GM12878 (cell line): ENCODE measurements at regions of chr7 and their contacts with region 1.

Region 1: DNA sequence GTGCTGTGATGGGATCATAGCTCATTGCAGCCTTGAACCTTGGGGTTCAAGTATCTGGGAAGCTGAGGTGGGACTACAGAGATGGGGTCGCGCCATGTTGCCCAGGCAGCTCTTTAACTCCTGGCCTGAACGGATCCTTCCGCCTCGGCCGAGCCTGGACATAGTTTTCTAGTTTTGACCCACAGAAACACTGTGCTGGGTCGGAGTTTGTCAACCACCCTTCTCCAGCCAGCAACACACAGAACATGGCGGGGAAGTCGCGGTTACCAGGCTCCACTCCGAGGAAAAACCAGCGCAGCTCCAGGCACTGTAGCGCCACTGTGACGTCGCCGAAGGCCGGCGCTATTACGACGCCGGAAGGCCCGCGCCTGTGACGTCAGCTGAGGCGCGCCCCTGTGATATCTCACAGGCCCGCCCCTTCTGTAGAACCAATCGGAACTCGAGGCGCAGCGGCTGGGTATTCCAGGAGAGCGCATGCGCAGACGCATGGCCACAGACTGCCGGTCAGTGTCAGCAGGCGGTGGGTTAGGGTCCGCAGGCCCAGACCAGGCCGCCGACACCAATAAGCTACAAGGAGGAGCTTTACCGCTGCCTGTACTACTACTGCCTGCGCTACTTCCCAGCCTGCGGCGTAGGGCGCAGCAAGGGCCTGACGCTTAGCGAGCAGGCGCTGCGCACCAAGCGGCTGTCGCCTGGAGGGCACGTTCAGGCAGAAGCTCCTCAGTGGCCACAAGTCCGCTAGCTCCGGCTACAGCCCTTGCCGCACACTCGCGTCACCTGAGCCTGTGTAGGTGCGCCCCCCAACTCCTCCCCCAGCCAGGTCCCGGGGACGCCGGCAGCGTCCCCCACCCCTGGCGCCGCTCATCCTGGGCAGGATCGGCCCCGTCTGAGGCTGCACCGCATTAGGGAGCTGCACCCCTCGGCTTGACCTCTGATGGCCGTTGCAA is 135.2 kb upstream of the KCTD7 start:
- DNase-seq: peak; percentile 86
- ATAC-seq: peak; percentile 93
- H3K4me3 ChIP-seq: peak overlapping the region; percentile 96
- H3K27ac ChIP-seq: peak overlapping the region; percentile 81
- H3K4me1 ChIP-seq: no peaks in the 10 kb centered on the region
- H3K27me3 ChIP-seq: no peaks in the 10 kb centered on the region
- CTCF ChIP-seq: peak in 2 of 3 experiments; percentile 6 to 37; a peak in 2 of 6 replicates
- EP300 ChIP-seq: 0 out of 4 replicates have a peak, but pooled peaks of 1 of the 2 experiments have one; percentile 10
- POLR2A ChIP-seq: peak; percentile 89
- RAD21 ChIP-seq: no peak

Region 2: DNA sequence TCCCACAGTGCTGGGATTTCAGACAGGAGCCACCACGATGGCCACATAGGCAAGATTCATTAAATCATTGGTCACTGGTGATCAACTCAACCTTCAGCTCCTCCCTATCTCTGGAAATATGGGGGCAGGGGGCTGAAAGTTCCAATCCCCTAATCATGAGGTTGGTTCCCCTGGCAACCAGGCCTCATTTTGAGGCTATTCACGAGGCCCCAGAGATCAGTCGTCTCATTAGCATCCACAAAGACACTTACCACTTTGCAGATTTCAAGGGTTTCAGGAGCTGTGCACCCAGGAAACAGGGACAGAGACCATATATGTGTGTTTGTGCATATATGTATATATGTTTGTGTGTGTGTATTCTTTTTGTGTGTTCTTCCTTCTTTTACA is 503.8 kb before region 1 on chr7:
- CTCF ChIA-PET with region 1: no interaction called
- POLR2A ChIA-PET with region 1: no interaction called
- RAD21 ChIA-PET with region 1: no interaction called
- SMC1A ChIA-PET with region 1: no interaction called
- in situ Hi-C with region 1: no loop called
- intact Hi-C with region 1: loop called (anchors 5 kb)
- DNase-seq: no peak
- ATAC-seq: no peak
- H3K4me3 ChIP-seq: no peak overlapping the region
- H3K27ac ChIP-seq: no peak overlapping the region
- H3K4me1 ChIP-seq: no peaks in the 10 kb centered on the region
- H3K27me3 ChIP-seq: no peaks in the 10 kb centered on the region
- CTCF ChIP-seq: no peak
- EP300 ChIP-seq: no peak
- POLR2A ChIP-seq: no peak
- RAD21 ChIP-seq: no peak

Region 3: GRCh38 chr7:66204822-66205740 is 288.4 kb before region 1 on chr7 and contains the start of gene TPST1:
- CTCF ChIA-PET with region 1: no interaction called
- POLR2A ChIA-PET with region 1: no interaction called
- RAD21 ChIA-PET with region 1: no interaction called
- SMC1A ChIA-PET with region 1: no interaction called
- in situ Hi-C with region 1: no loop called
- intact Hi-C with region 1: loop called (anchors 10 kb)
- DNase-seq: peak; percentile 73
- ATAC-seq: peak; percentile 97
- H3K4me3 ChIP-seq: peak within 1 kb of the TSS; percentile 94
- H3K27ac ChIP-seq: peak within 1 kb of the TSS; percentile 55; the same call in 1 of the 2 replicates
- H3K4me1 ChIP-seq: peaks cover 6% of the 10 kb centered on the region; the same call in 1 of the 2 replicates
- H3K27me3 ChIP-seq: no peaks in the 10 kb centered on the region
- CTCF ChIP-seq: peak; percentile 57 to 64 (median 59)
- EP300 ChIP-seq: no peak
- POLR2A ChIP-seq: peak; percentile 97
- RAD21 ChIP-seq: peak; percentile 48; the same call in 1 of the 2 replicates
- polyA plus RNA-seq, gene TPST1: 1.1 to 2.2 TPM

Region 4: GRCh38 chr7:66409479-66409878 is 84.0 kb before region 1 on chr7:
- CTCF ChIA-PET with region 1: no interaction called
- POLR2A ChIA-PET with region 1: no interaction called
- RAD21 ChIA-PET with region 1: no interaction called
- SMC1A ChIA-PET with region 1: no interaction called
- in situ Hi-C with region 1: no loop called
- intact Hi-C with region 1: no loop called
- DNase-seq: no peak
- ATAC-seq: no peak
- H3K4me3 ChIP-seq: no peak overlapping the region
- H3K27ac ChIP-seq: no peak overlapping the region
- H3K4me1 ChIP-seq: peaks cover 4% of the 10 kb centered on the region
- H3K27me3 ChIP-seq: no peaks in the 10 kb centered on the region
- CTCF ChIP-seq: no peak
- EP300 ChIP-seq: no peak
- POLR2A ChIP-seq: no peak
- RAD21 ChIP-seq: no peak